ENCODE measurements at regions of chr10 and their contacts with region 1.

Region 1: DNA sequence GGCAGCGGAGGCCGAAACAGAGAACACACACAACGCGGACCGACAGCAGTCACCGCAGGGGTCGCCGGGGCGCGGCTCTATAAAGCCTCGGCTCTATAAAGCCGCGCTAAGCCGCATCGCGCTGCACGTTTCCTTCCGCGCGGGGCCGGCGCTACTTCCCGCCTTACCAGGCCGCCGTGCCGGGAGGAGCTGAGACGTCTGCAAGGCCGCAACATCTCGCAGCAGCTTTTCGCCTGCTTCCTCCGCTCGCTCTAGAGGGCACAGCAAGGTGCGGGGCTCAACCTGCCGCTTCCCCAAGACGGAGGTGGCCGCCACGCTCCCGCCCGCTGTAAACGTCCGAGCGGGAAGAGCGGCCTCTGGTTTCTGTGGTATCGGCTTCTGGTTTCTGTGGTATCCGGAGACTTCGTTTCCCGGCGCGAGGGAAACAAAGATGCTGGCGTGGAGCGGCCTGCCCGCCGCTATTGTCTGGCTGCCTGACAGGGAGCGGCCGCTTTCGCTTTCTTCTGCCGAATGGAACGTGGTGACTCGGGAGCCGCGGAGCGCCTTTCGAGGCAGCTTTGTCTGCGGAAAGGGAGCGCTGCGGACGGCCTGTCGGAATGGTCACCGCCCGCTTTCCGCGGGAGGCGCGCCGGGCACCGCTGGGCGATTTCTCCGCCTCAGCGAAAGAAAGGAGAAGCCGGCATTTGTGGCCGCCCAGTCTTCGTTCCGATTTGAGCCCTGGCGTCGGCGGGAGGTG is 91.8 kb downstream of the SPAG6 start:
- DNase-seq: peak; percentile 84 to 96 (median 90)
- ATAC-seq: peak; percentile 86
- H3K4me3 ChIP-seq: peak overlapping the region; percentile 88 to 93
- H3K4me3 Mint-ChIP-seq: peak overlapping the region; percentile 96
- H3K27ac ChIP-seq: peak overlapping the region; percentile 93 to 94
- H3K27ac Mint-ChIP-seq: peak overlapping the region; percentile 98
- H3K4me1 ChIP-seq: peaks cover 20% of the 10 kb centered on the region
- H3K4me1 Mint-ChIP-seq: peaks cover 29% of the 10 kb centered on the region
- H3K27me3 ChIP-seq: no peaks in the 10 kb centered on the region
- H3K27me3 Mint-ChIP-seq: no peaks in the 10 kb centered on the region
- CTCF ChIP-seq: no peak

Region 2: GRCh38 chr10:21516242-21517131 is 920.6 kb before region 1 on chr10:
- CTCF ChIA-PET with region 1: no interaction called
- POLR2A ChIA-PET with region 1: no interaction called
- intact Hi-C with region 1: loop called in 1 of 2 experiments (anchors 5 kb)
- DNase-seq: peak in 5 of 9 experiments; percentile 43 to 78 (median 70)
- ATAC-seq: peak; percentile 66
- H3K4me3 ChIP-seq: peak overlapping the region; percentile 29 to 33
- H3K4me3 Mint-ChIP-seq: peak overlapping the region; percentile 83
- H3K27ac ChIP-seq: no peak overlapping the region
- H3K27ac Mint-ChIP-seq: no peak overlapping the region
- H3K4me1 ChIP-seq: peaks cover 38% of the 10 kb centered on the region
- H3K4me1 Mint-ChIP-seq: peaks cover 36% of the 10 kb centered on the region
- H3K27me3 ChIP-seq: peaks cover 68 to 71% of the 10 kb centered on the region in 2 experiments
- H3K27me3 Mint-ChIP-seq: peaks cover 82% of the 10 kb centered on the region
- CTCF ChIP-seq: no peak

Region 3: GRCh38 chr10:22251751-22252223 is 185.3 kb before region 1 on chr10:
- CTCF ChIA-PET with region 1: no interaction called
- POLR2A ChIA-PET with region 1: interaction called, 21 read pairs
- intact Hi-C with region 1: loop called (anchors 2 to 5 kb)
- DNase-seq: peak; percentile 25 to 82 (median 63)
- ATAC-seq: peak; percentile 59
- H3K4me3 ChIP-seq: peak overlapping the region; percentile 59 to 67
- H3K4me3 Mint-ChIP-seq: peak overlapping the region; percentile 94
- H3K27ac ChIP-seq: peak overlapping the region; percentile 77 to 85
- H3K27ac Mint-ChIP-seq: peak overlapping the region; percentile 98
- H3K4me1 ChIP-seq: peaks cover 6% of the 10 kb centered on the region
- H3K4me1 Mint-ChIP-seq: peaks cover 24% of the 10 kb centered on the region
- H3K27me3 ChIP-seq: peaks cover 9 to 10% of the 10 kb centered on the region in 2 experiments
- H3K27me3 Mint-ChIP-seq: peaks cover 30% of the 10 kb centered on the region
- CTCF ChIP-seq: no peak

Region 4: GRCh38 chr10:22447068-22447467 is 10.0 kb after region 1 on chr10:
- CTCF ChIA-PET with region 1: no interaction called
- POLR2A ChIA-PET with region 1: interaction called, 20 read pairs
- intact Hi-C with region 1: no loop called
- DNase-seq: no peak
- ATAC-seq: no peak
- H3K4me3 ChIP-seq: no peak overlapping the region
- H3K4me3 Mint-ChIP-seq: no peak overlapping the region
- H3K27ac ChIP-seq: no peak overlapping the region
- H3K27ac Mint-ChIP-seq: no peak overlapping the region
- H3K4me1 ChIP-seq: no peaks in the 10 kb centered on the region
- H3K4me1 Mint-ChIP-seq: no peaks in the 10 kb centered on the region
- H3K27me3 ChIP-seq: no peaks in the 10 kb centered on the region
- H3K27me3 Mint-ChIP-seq: peaks cover 19% of the 10 kb centered on the region
- CTCF ChIP-seq: no peak

Region 5: DNA sequence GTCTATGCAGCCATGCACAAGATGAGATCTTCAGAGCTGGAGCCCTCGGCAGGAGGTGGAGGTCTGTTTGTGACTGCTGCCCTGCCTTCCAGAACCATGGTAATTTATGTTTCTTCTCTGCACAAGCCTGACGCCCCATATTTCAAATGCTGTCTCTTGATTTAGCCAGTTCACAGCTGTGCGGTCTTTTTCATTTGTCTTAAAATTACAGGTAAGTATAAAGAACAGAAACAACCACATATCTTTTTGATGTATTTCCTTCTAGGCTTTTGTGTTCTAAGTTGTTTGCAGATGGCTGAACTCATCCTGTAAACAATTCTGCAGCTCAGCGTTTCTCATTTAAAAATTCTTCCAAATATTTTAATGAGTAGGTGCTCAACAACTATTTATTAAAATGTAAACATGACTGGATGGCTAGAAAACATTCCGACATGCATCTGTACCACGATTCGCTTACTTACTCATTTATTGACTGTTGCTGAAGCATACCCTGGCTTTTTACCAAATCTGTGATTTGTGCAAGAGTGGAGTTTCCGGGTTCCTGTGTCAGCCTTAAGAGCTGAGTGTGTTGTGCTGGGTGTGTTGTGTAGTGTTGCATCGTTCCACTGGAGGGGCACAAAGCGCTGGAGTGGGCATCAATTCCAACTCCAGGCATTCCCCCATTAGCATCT is 218.4 kb after region 1 on chr10:
- CTCF ChIA-PET with region 1: no interaction called
- POLR2A ChIA-PET with region 1: interaction called, 5 read pairs
- intact Hi-C with region 1: loop called in 1 of 2 experiments (anchors 10 kb)
- DNase-seq: peak in 7 of 9 experiments; percentile 29 to 84 (median 67)
- ATAC-seq: peak; percentile 72
- H3K4me3 ChIP-seq: peak overlapping the region; percentile 3 to 9
- H3K4me3 Mint-ChIP-seq: peak overlapping the region; percentile 72
- H3K27ac ChIP-seq: peak overlapping the region; percentile 19 to 74
- H3K27ac Mint-ChIP-seq: peak overlapping the region; percentile 96
- H3K4me1 ChIP-seq: peaks cover 98% of the 10 kb centered on the region
- H3K4me1 Mint-ChIP-seq: peaks cover 92% of the 10 kb centered on the region
- H3K27me3 ChIP-seq: no peaks in the 10 kb centered on the region
- H3K27me3 Mint-ChIP-seq: no peaks in the 10 kb centered on the region
- CTCF ChIP-seq: no peak

Region 6: DNA sequence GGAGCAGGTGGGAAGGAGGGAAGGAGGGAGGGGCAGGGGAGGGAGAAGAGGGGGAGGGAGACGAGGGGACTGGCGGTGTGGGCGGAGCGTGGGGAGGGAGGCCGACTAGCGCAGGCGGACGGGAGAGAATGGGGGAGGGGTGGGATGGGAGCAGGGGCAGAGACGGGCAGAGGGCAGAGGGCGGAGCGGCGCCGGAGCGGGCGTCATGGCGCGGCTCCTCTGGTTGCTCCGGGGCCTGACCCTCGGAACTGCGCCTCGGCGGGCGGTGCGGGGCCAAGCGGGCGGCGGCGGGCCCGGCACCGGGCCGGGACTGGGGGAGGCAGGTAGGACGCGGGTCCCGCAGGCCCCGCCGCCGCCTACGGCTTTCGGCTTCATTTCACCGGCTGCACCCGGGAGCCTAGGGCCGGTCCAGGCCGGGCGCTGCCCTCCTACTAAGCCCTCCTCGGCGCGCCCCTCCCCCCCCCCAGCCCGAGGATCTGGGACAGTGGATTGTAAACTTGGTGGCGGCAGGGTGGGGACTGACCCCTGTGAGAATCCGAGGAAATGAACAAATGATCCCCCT is 658.4 kb after region 1 on chr10 and contains the start of gene MSRB2:
- CTCF ChIA-PET with region 1: no interaction called
- POLR2A ChIA-PET with region 1: no interaction called
- intact Hi-C with region 1: loop called in 1 of 2 experiments (anchors 10 kb)
- DNase-seq: peak; percentile 37 to 93 (median 69)
- ATAC-seq: peak; percentile 68
- H3K4me3 ChIP-seq: peak within 1 kb of the TSS; percentile 53 to 67
- H3K4me3 Mint-ChIP-seq: peak within 1 kb of the TSS; percentile 83
- H3K27ac ChIP-seq: peak within 1 kb of the TSS; percentile 44 to 61
- H3K27ac Mint-ChIP-seq: peak within 1 kb of the TSS; percentile 85
- H3K4me1 ChIP-seq: peaks cover 15% of the 10 kb centered on the region
- H3K4me1 Mint-ChIP-seq: peaks cover 28% of the 10 kb centered on the region
- H3K27me3 ChIP-seq: no peaks in the 10 kb centered on the region
- H3K27me3 Mint-ChIP-seq: no peaks in the 10 kb centered on the region
- CTCF ChIP-seq: no peak
- total RNA-seq, gene MSRB2: 1.0 to 1.1 TPM

Measured in CD8-positive, alpha-beta T cell (primary cell).